ENCODE measurements at regions of chr13 and their contacts with region 1.

Region 1: DNA sequence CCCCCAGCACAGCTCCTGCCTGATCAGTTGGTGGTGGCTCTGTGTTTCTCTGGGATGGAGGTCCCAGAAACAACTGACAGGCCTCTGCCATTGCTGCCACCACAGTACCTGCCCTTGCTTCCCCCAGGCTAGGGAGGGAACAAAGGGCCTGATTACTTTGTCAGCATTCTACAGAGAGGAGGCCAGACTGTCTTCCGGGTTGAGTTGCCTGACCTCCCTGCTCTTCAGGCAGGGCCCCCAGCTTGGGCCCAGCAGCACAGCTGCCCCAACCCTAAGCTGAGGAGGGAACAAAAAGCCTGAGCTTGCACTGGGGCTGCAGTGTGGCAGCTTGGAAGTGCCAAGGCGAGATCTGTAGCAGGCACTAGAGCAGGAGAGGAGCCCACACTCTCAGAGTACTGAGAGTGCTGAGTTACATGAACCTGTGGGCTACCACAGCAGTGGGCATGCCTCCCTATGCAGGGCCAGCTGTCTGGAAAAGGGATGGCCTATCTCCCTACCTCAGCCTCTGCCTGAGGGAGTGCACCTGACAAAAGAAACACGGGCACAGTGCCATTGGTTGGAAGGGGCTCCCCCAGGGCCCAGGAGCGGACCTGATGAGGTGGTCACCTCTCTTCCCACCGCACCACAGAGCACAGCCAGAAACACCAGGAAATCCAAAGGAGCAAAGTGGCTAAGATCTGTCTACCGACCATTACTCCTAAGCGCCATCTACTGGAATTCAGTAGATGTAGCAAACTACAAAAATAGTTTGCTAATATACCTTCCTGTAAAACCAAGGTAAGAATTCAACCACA is 24.4 kb downstream of the SLC25A15 start:
- DNase-seq: no peak
- H3K4me3 Mint-ChIP-seq: no peak overlapping the region
- H3K27ac Mint-ChIP-seq: no peak overlapping the region
- H3K4me1 Mint-ChIP-seq: no peaks in the 10 kb centered on the region
- H3K27me3 Mint-ChIP-seq: no peaks in the 10 kb centered on the region

Region 2: DNA sequence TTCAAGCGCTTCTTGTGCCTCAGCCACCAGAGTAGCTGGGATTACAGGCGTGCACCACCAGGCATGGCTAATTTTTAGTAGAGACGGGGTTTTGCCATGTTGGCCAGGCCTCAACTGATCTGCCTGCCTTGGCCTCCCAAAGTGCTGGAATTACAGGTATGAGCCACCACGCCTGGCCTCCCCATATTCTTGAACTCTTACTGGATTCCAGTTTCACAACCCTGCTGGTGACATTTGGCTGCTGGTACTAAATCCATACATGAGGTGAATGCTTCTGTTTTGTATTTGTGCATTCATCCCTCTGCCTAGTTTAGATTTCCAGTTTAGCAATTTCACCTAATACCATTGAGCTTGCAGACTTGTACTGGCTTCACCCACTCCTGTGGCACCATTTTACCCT is 10.5 kb before region 1 on chr13:
- CTCF ChIA-PET with region 1: interaction called, 12 read pairs
- DNase-seq: no peak
- H3K4me3 Mint-ChIP-seq: no peak overlapping the region
- H3K27ac Mint-ChIP-seq: no peak overlapping the region
- H3K4me1 Mint-ChIP-seq: peaks cover 10% of the 10 kb centered on the region
- H3K27me3 Mint-ChIP-seq: no peaks in the 10 kb centered on the region